Activated CD4-positive, alpha-beta T cell treated with anti-CD3 and anti-CD28 coated beads, Interleukin-2, amount 10 ng/mL, durations not matched to agents 7 days and 5 days (primary cell): ENCODE measurements at regions of chr3 and their contacts with region 1.

Region 1: DNA sequence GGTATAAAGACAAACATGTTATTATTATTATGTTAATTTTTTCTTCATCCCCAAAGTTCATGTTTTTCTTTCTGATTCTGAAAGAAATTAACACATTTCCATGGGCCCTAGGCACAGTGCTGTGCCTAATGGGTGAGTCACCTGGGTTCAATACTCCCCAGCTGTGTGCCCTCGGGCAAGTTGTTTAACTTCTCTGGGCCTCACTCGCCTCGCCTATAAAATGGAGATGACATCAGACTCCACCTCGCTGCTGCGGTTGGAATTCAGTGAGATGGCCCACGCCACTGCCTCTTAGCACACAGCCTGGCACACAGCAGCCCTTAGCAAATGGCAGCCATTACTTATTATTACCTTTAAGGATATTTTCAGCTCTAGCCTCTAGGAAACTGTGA is 22.6 kb downstream of the DNASE1L3 start:
- DNase-seq: no peak
- H3K4me3 Mint-ChIP-seq: no peak overlapping the region
- H3K27ac Mint-ChIP-seq: no peak overlapping the region
- H3K4me1 Mint-ChIP-seq: peaks cover 1% of the 10 kb centered on the region
- H3K27me3 Mint-ChIP-seq: no peaks in the 10 kb centered on the region

Region 2: GRCh38 chr3:58177747-58178527 is 10.2 kb before region 1 on chr3:
- CTCF ChIA-PET with region 1: interaction called, 30 read pairs
- POLR2A ChIA-PET with region 1: no interaction called
- DNase-seq: peak; percentile 91
- H3K4me3 Mint-ChIP-seq: peak overlapping the region; percentile 52
- H3K27ac Mint-ChIP-seq: no peak overlapping the region
- H3K4me1 Mint-ChIP-seq: peaks cover 20% of the 10 kb centered on the region
- H3K27me3 Mint-ChIP-seq: peaks cover 7% of the 10 kb centered on the region

Region 3: DNA sequence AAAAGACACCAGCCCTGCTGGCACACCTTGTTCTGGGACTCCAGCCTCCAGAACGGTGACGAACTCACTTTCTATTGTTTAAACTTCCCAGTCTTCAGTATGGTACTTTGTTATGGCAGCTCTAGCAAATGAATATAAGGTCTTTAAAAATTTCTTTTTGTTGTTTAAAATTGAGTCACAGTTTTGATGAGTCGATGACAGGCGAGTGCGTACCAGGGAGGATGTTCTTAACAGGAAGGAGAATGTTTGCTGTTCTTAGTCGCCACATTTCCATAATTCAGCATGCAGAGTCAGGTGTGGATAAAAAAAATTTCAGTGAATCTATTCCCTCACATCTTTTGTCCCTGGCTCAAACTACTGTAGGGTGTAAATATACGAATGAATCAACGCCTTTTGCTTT is 10.2 kb after region 1 on chr3:
- CTCF ChIA-PET with region 1: interaction called, 10 read pairs
- POLR2A ChIA-PET with region 1: no interaction called
- DNase-seq: no peak
- H3K4me3 Mint-ChIP-seq: no peak overlapping the region
- H3K27ac Mint-ChIP-seq: no peak overlapping the region
- H3K4me1 Mint-ChIP-seq: peaks cover 2% of the 10 kb centered on the region
- H3K27me3 Mint-ChIP-seq: peaks cover 12% of the 10 kb centered on the region

Region 4: DNA sequence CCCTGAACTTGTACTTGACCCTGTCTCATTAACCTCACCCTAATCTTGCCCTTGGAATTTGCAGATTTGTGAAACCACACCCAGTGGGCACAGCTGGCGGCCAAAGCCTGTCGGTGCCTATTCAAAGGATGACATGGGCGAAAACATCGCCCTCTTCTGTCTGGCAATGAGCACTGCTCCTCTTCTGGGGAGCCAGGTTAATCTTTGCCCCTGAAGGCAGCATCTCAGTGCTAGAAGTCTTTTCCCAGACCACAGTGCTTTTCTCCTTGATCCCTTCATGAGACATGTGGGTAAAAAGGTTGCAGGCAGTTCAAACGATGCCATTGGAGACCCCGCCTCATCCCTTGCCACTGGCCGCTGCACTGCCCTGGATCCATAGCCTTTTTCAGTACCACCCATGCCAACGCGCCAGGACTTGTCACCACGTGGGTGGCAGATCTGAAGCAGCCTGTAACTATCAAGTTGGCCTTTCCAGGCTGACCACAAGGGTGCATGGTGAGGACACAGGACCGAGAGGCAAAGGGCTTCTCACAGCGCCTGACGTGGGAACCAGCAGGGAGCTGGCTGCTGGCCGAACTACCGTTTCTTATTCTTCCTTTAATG is 29.1 kb after region 1 on chr3:
- CTCF ChIA-PET with region 1: interaction called, 30 read pairs
- POLR2A ChIA-PET with region 1: no interaction called
- DNase-seq: peak; percentile 64
- H3K4me3 Mint-ChIP-seq: no peak overlapping the region
- H3K27ac Mint-ChIP-seq: no peak overlapping the region
- H3K4me1 Mint-ChIP-seq: peaks cover 16% of the 10 kb centered on the region
- H3K27me3 Mint-ChIP-seq: peaks cover 7% of the 10 kb centered on the region

Region 5: DNA sequence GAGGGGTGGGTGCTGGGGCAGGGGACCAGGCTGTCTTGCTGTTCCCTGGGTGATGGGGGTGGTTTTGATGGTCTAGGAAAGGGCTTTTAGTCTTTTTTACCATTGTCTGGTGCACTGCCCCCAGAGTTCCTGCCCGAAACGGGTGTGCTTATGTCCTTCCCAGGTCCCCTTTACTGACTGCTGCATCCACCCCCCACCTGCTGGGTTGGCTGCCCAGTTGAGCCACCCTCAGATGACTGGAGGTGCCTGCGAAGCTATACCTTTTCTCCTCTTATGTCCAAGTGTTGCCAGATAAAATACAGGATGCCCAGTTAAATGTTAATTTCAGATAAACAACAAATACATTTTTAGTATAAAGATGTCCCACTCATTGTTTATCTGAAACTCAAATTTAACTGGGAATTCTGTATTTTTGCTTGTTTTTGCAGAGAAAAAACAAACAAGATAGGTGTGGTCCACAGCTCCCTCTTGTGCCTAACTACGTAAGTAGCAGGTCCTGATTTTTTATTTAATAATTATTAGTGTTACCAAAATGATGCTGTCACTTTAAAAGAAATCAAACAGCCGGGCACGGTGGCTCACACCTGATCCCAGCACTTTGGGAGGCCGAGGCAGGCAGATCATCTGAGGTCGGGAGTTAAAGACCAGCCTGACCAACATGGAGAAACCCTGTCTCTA is 111.8 kb after region 1 on chr3:
- CTCF ChIA-PET with region 1: interaction called, 10 read pairs
- POLR2A ChIA-PET with region 1: no interaction called
- DNase-seq: no peak
- H3K4me3 Mint-ChIP-seq: no peak overlapping the region
- H3K27ac Mint-ChIP-seq: no peak overlapping the region
- H3K4me1 Mint-ChIP-seq: peaks cover under 1% of the 10 kb centered on the region
- H3K27me3 Mint-ChIP-seq: peaks cover 32% of the 10 kb centered on the region